ENCODE measurements at regions of chrX and their contacts with region 1.

Region 1: DNA sequence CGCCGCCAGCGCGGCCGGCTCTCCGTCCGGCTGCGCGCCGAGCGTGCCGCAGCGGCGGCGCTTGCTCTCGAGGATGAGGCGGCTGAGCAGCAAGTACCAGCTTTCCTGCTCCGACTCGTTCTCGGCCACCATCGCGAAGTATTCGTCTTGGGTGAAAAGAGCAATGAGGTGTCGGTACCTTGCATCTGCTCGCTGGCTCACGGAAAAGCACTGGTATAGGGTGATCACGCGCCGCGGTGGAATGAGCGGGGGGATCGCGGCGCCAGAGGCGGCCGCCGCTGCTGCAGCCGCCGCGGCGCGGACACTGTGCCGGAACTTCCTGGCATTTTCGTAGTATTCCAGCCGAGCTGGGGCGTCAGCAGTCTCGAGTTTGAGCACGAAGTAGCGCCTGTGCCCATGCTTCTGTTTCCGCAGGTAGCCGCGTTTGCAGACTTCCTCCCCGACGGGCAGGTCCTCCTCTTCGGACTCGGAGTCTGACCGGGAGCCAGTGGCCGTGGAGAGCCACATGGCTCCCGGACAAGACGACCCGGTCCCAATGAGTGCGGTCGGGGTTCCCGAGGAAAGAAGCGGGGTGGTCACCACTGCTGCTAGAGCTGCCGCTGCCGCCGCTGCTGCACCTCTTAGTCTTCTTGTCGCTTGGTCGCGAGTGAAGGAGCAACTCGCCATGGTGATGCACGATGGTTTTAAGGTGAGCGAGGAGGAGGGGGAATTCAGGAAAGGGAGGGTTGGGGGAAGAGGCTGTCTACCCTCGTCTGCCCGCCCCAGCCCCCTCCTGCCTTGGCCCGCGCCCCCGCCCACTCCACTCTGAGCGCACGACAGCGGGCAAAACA is 469 bp downstream of the IRS4 start:
- DNase-seq: peak in 1 of 2 experiments; percentile 51
- H3K4me3 ChIP-seq: peak overlapping the region; percentile 61 to 89 (median 79)
- H3K27ac ChIP-seq: no peak overlapping the region
- H3K4me1 ChIP-seq: peaks cover 0 to 13% (median 3%) of the 10 kb centered on the region in 4 experiments; a peak in 2 of 7 replicates
- H3K27me3 ChIP-seq: peaks cover 0 to 31% (median 20%) of the 10 kb centered on the region in 4 experiments; a peak in 6 of 7 replicates
- CTCF ChIP-seq: no peak
- EP300 ChIP-seq: no peak
- POLR2A ChIP-seq: no peak
- RAD21 ChIP-seq: no peak

Region 2: GRCh38 chrX:108610141-108610540 is 125.8 kb before region 1 on chrX:
- CTCF ChIA-PET with region 1: no interaction called
- POLR2A ChIA-PET with region 1: no interaction called
- DNase-seq: no peak
- H3K4me3 ChIP-seq: no peak overlapping the region
- H3K27ac ChIP-seq: no peak overlapping the region
- H3K4me1 ChIP-seq: no peaks in the 10 kb centered on the region
- H3K27me3 ChIP-seq: no peaks in the 10 kb centered on the region
- CTCF ChIP-seq: no peak
- EP300 ChIP-seq: no peak
- POLR2A ChIP-seq: no peak
- RAD21 ChIP-seq: no peak

Region 3: DNA sequence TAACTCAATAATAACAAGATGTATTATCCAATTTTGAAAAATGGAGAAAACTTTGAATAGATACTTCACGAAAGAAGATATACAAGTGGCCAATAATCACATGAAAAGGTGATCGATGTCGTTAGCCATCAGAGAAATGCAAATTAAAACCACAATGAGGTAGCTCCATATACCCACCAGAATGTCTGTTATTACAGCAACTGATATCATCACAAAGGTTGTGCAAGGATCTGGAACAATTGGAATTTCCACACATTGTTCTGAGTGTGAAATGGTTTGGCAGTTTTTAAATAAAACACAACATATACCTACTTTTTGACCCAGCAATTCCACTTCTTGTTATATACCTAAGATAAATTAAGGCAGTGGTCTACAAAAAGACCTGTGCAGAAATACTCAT is 71.2 kb before region 1 on chrX:
- CTCF ChIA-PET with region 1: no interaction called
- POLR2A ChIA-PET with region 1: no interaction called
- DNase-seq: no peak
- H3K4me3 ChIP-seq: no peak overlapping the region
- H3K27ac ChIP-seq: no peak overlapping the region
- H3K4me1 ChIP-seq: no peaks in the 10 kb centered on the region
- H3K27me3 ChIP-seq: no peaks in the 10 kb centered on the region
- CTCF ChIP-seq: no peak
- EP300 ChIP-seq: no peak
- POLR2A ChIP-seq: no peak
- RAD21 ChIP-seq: no peak

Region 4: GRCh38 chrX:108699368-108699767 is 36.5 kb before region 1 on chrX:
- CTCF ChIA-PET with region 1: interaction called, 31 read pairs
- POLR2A ChIA-PET with region 1: interaction called, 4 read pairs
- DNase-seq: no peak
- H3K4me3 ChIP-seq: no peak overlapping the region
- H3K27ac ChIP-seq: no peak overlapping the region
- H3K4me1 ChIP-seq: no peaks in the 10 kb centered on the region
- H3K27me3 ChIP-seq: no peaks in the 10 kb centered on the region
- CTCF ChIP-seq: peak in 2 of 3 experiments; percentile 12 to 34; a peak in 2 of 4 replicates
- EP300 ChIP-seq: no peak
- POLR2A ChIP-seq: no peak
- RAD21 ChIP-seq: peak; percentile 65 to 67

Measured in H1 (cell line).